A549 (cell line): ENCODE measurements at regions of chr1 and their contacts with region 1.

Region 1: GRCh38 chr1:180178511-180179161 is 24.0 kb downstream of the QSOX1 start:
- DNase-seq: peak; percentile 53 to 82
- ATAC-seq: peak; percentile 27 to 76; a peak in 4 of 6 replicates
- H3K4me3 ChIP-seq: no peak overlapping the region
- H3K27ac ChIP-seq: no peak overlapping the region
- H3K4me1 ChIP-seq: no peaks in the 10 kb centered on the region
- CTCF ChIP-seq: peak; percentile 94
- EP300 ChIP-seq: no peak
- POLR2A ChIP-seq: no peak
- RAD21 ChIP-seq: peak; percentile 93 to 95

Region 2: GRCh38 chr1:179706339-179706941 is 472.2 kb before region 1 on chr1:
- CTCF ChIA-PET with region 1: interaction called, 10 read pairs
- POLR2A ChIA-PET with region 1: no interaction called
- DNase-seq: peak; percentile 30 to 68
- ATAC-seq: peak; percentile 33 to 68; a peak in 3 of 6 replicates
- H3K4me3 ChIP-seq: no peak overlapping the region
- H3K27ac ChIP-seq: no peak overlapping the region
- H3K4me1 ChIP-seq: no peaks in the 10 kb centered on the region
- CTCF ChIP-seq: peak; percentile 97
- EP300 ChIP-seq: no peak
- POLR2A ChIP-seq: no peak
- RAD21 ChIP-seq: peak; percentile 94 to 95

Region 3: DNA sequence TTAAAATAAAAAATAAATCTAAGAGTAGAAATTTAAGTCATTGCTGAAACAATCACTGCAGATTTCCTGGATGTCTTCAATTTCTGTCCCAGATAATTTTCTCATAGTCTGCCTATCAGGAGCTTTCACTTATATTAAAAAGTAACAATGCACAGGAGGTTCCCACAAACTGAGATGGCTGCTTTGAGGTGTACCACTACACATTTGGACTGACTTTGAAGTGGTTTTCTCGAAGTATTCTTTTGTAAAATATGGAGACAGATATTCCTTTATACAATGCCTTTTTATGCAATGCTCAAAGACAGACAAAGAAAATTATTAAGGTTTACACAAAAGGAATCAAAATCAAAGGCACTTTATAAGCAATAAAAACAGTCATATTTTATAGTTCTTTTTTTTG is 325.5 kb before region 1 on chr1:
- CTCF ChIA-PET with region 1: no interaction called
- POLR2A ChIA-PET with region 1: no interaction called
- DNase-seq: no peak
- ATAC-seq: no peak
- H3K4me3 ChIP-seq: no peak overlapping the region
- H3K27ac ChIP-seq: no peak overlapping the region
- H3K4me1 ChIP-seq: no peaks in the 10 kb centered on the region
- CTCF ChIP-seq: no peak
- EP300 ChIP-seq: no peak
- POLR2A ChIP-seq: no peak
- RAD21 ChIP-seq: no peak

Region 4: DNA sequence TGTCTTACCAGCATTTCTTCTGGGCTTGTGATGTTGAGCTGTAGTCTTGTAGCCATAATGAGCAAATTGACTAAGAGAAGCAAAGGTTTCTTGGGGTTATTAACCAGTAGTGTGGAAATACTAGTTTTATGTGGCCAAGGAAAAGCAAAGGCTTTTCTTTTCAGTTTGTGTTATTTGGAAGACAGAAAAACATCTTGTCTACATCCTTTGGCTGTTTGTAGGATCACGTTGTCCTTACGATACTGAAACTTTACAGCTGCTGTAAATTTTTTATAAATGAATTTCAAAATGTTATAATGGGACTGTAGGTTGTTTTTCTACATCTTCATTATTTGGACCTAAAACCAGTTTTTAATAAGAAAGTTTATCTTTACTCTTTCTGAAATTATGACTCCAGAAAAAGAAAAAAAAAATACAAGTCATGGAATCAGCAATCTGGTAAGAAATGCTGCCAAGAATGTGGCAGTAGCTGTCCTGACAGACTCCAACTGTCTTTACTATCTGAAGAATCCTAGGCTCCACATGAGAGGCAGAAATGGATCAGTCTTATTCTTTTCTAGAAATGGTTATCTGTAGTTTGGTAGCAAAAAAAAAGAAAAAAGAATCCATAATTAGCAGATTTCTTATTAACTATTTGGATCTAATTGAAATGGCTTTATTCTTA is 65.5 kb before region 1 on chr1:
- CTCF ChIA-PET with region 1: interaction called, 14 read pairs
- POLR2A ChIA-PET with region 1: no interaction called
- DNase-seq: no peak
- ATAC-seq: no peak
- H3K4me3 ChIP-seq: no peak overlapping the region
- H3K27ac ChIP-seq: no peak overlapping the region
- H3K4me1 ChIP-seq: peaks cover 12% of the 10 kb centered on the region
- CTCF ChIP-seq: no peak
- EP300 ChIP-seq: no peak
- POLR2A ChIP-seq: no peak
- RAD21 ChIP-seq: no peak

Region 5: DNA sequence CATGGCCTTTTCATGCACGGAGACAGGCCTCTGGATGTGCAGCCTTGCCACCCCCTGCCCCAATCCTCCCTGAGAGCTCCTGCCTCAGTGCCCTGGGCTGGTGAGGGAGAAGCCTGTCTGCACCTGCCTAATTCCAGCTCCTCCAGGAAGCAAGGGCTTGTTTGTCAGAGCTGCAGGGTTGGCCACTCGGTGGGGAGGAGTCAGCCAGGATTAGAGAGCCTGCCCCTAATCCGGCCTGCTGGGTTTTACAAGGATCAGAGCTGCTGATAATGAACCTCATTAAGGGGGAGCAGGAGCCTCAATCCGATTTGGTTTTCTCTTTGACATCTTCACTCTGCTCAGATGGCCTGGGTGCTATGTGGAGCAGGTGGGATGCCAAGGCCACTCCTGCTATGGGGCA is 19.6 kb after region 1 on chr1:
- CTCF ChIA-PET with region 1: interaction called, 77 read pairs
- POLR2A ChIA-PET with region 1: no interaction called
- DNase-seq: no peak
- ATAC-seq: no peak
- H3K4me3 ChIP-seq: no peak overlapping the region
- H3K27ac ChIP-seq: no peak overlapping the region
- H3K4me1 ChIP-seq: no peaks in the 10 kb centered on the region
- CTCF ChIP-seq: no peak
- EP300 ChIP-seq: no peak
- POLR2A ChIP-seq: no peak
- RAD21 ChIP-seq: no peak

Region 6: GRCh38 chr1:180482425-180483275 is 304.0 kb after region 1 on chr1:
- CTCF ChIA-PET with region 1: interaction called, 12 read pairs
- POLR2A ChIA-PET with region 1: no interaction called
- DNase-seq: peak; percentile 39 to 62
- ATAC-seq: peak; percentile 51 to 78; a peak in 4 of 6 replicates
- H3K4me3 ChIP-seq: no peak overlapping the region
- H3K27ac ChIP-seq: no peak overlapping the region
- H3K4me1 ChIP-seq: peaks cover 5% of the 10 kb centered on the region; the same call in 1 of the 3 replicates
- CTCF ChIP-seq: peak; percentile 84
- EP300 ChIP-seq: no peak
- POLR2A ChIP-seq: no peak
- RAD21 ChIP-seq: peak; percentile 52 to 57